ENCODE measurements at regions of chr14 and their contacts with region 1.

Region 1: GRCh38 chr14:95361373-95362137 is 41.8 kb upstream of the CLMN start:
- DNase-seq: peak; percentile 76
- H3K4me3 Mint-ChIP-seq: no peak overlapping the region
- H3K27ac Mint-ChIP-seq: no peak overlapping the region
- H3K4me1 Mint-ChIP-seq: no peaks in the 10 kb centered on the region
- H3K27me3 Mint-ChIP-seq: peaks cover 45% of the 10 kb centered on the region

Region 2: GRCh38 chr14:94689218-94689984 is 672.2 kb before region 1 on chr14:
- intact Hi-C with region 1: loop called (anchors 5 kb)
- DNase-seq: peak; percentile 85
- H3K4me3 Mint-ChIP-seq: no peak overlapping the region
- H3K27ac Mint-ChIP-seq: no peak overlapping the region
- H3K4me1 Mint-ChIP-seq: no peaks in the 10 kb centered on the region
- H3K27me3 Mint-ChIP-seq: peaks cover 5% of the 10 kb centered on the region

Region 3: DNA sequence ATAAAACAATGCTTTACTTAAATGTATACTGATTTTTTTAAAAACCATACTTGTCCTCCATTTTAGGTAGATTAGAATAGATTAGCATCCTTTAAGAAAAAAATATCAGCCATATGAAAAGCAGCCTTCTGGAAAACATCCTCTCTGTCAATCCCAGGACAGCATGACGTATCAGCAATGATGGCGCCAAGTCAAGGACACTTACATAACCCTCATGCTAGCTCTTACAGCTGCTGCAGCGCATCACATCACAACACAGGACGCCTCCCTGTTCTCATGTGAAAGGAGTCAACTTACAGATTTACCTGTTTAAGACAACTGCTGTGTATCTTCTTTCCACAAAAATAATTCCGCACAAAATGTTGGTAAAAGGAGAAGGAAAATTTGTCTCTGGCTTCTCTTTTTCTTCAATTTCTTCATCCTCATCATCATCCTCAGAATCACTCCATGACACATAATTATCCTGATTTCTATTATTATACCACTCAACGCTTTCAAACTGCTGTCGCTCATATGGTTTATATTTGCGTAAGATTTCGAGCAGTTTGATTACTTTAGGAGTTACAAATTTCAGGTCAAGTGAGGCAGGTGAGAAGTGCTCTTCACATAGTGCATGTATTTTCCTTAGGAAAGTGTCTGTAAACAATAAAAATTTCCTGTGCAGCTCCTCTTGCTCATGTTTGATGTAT is 237.5 kb before region 1 on chr14:
- intact Hi-C with region 1: loop called (anchors 10 kb)
- DNase-seq: no peak
- H3K4me3 Mint-ChIP-seq: no peak overlapping the region
- H3K27ac Mint-ChIP-seq: no peak overlapping the region
- H3K4me1 Mint-ChIP-seq: peaks cover 14% of the 10 kb centered on the region
- H3K27me3 Mint-ChIP-seq: no peaks in the 10 kb centered on the region

Region 4: DNA sequence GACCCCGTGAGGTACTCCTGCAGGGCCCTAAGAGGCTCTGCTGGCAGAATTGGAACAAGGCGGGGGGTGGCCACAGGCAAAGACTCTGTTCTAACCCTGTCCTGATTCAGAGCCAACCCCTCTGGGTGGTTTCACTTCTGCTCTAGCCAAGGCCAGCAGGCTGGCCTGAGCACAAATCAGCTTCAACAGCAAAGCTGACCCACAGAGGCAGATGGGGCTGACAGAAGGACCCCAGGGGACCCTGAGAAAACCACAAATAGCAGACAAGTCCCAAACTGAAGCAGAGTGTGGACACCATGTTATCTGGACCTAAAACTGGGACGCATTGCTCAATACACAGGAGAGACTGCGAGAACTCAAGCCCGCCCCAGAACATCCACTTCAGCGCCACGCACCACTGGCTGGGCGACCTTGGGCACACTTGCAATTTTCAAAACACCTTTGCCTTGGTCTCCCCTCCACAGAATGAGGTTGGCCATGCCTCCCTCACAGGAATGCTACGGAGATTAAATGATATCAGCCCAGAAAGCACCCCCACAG is 127.8 kb before region 1 on chr14:
- intact Hi-C with region 1: loop called (anchors 10 kb)
- DNase-seq: no peak
- H3K4me3 Mint-ChIP-seq: no peak overlapping the region
- H3K27ac Mint-ChIP-seq: no peak overlapping the region
- H3K4me1 Mint-ChIP-seq: no peaks in the 10 kb centered on the region
- H3K27me3 Mint-ChIP-seq: peaks cover 7% of the 10 kb centered on the region